Naive thymus-derived CD4-positive, alpha-beta T cell (primary cell): ENCODE measurements at regions of chr2 and their contacts with region 1.

Region 1: GRCh38 chr2:55617175-55618024 is at the start of gene PPP4R3B:
- DNase-seq: peak; percentile 94 to 100 (median 99)
- ATAC-seq: peak; percentile 94
- H3K4me3 ChIP-seq: peak within 1 kb of the TSS; percentile 83
- H3K4me3 Mint-ChIP-seq: no peak within 1 kb of the TSS
- H3K27ac ChIP-seq: peak within 1 kb of the TSS; percentile 99
- H3K27ac Mint-ChIP-seq: no peak within 1 kb of the TSS
- H3K4me1 ChIP-seq: peaks cover 33 to 46% of the 10 kb centered on the region in 2 donors
- H3K4me1 Mint-ChIP-seq: peaks cover 23 to 67% (median 30%) of the 10 kb centered on the region in 7 donors
- H3K27me3 ChIP-seq: no peaks in the 10 kb centered on the region
- H3K27me3 Mint-ChIP-seq: no peaks in the 10 kb centered on the region
- total RNA-seq, gene PPP4R3B: 67.2 to 113 (median 88.0) TPM

Region 2: GRCh38 chr2:53767405-53768241 is 1849.8 kb before region 1 on chr2 and contains the start of gene CHAC2:
- CTCF ChIA-PET with region 1: no interaction called
- POLR2A ChIA-PET with region 1: no interaction called
- intact Hi-C with region 1: loop called (anchors 1 to 2 kb)
- DNase-seq: peak; percentile 74 to 86 (median 84)
- ATAC-seq: peak; percentile 93
- H3K4me3 ChIP-seq: peak within 1 kb of the TSS; percentile 80
- H3K4me3 Mint-ChIP-seq: peak within 1 kb of the TSS; percentile 88 to 98 (median 92)
- H3K27ac ChIP-seq: peak within 1 kb of the TSS; percentile 86
- H3K27ac Mint-ChIP-seq: peak within 1 kb of the TSS; percentile 60 to 99 (median 90)
- H3K4me1 ChIP-seq: peaks cover 0 to 8% of the 10 kb centered on the region in 2 donors
- H3K4me1 Mint-ChIP-seq: peaks cover 7 to 41% (median 33%) of the 10 kb centered on the region in 7 donors
- H3K27me3 ChIP-seq: no peaks in the 10 kb centered on the region
- H3K27me3 Mint-ChIP-seq: no peaks in the 10 kb centered on the region
- total RNA-seq, gene CHAC2: 0.29 to 12.1 (median 1.2) TPM

Region 3: DNA sequence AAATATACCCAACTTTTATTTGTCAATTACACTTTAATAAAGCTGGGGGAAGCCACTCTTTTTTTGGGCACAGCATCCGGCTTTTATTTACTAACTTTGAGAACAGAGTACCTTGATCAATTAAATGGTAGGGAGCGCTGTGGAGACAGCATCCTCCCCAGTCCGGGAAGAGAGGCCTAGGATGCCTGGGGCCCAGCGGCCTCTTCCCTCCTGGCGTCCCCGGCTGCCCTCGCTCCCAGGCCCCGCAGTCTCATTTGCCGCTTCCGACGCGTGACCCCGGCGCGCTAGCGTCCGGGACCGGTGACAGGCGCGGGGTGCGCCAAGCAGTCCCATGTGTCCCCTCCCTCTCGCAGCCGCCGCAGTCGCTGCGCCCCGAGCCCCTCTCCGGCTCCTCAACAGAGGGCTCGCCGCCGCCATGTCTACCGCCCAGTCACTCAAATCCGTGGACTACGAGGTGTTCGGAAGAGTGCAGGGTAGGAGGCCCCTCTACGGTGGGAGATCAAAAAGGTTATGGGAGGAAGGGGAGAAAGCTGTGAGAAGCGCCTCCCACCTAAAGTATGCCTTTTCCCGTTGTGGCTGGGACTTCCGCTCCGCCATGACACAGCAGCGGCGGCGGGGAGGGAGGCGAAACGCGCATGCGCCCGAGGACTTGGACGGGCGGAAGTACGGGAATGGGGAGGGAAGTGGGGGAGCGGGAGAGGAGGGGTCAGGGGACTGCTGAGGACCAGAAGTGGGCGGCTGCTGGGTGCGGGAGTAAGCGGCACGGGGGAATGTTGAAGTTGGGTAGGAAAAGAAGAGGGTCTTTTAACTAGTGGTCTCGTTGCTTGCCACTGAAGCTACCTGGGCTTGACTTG is 1501.9 kb before region 1 on chr2 and contains the start of gene ACYP2:
- CTCF ChIA-PET with region 1: no interaction called
- POLR2A ChIA-PET with region 1: interaction called, 3 read pairs
- intact Hi-C with region 1: loop called in 1 of 2 experiments (anchors 1 kb)
- DNase-seq: peak; percentile 76 to 93 (median 89)
- ATAC-seq: peak; percentile 88
- H3K4me3 ChIP-seq: peak within 1 kb of the TSS; percentile 89
- H3K4me3 Mint-ChIP-seq: peak within 1 kb of the TSS; percentile 92 to 98 (median 97)
- H3K27ac ChIP-seq: peak within 1 kb of the TSS; percentile 93
- H3K27ac Mint-ChIP-seq: peak within 1 kb of the TSS; percentile 98 to 100 (median 99)
- H3K4me1 ChIP-seq: peaks cover 0 to 6% of the 10 kb centered on the region in 2 donors
- H3K4me1 Mint-ChIP-seq: peaks cover 10 to 31% (median 24%) of the 10 kb centered on the region in 7 donors
- H3K27me3 ChIP-seq: no peaks in the 10 kb centered on the region
- H3K27me3 Mint-ChIP-seq: peaks cover 0 to 5% (median 0%) of the 10 kb centered on the region in 5 donors
- total RNA-seq, gene ACYP2: 12.3 to 19.6 (median 15.6) TPM

Region 4: DNA sequence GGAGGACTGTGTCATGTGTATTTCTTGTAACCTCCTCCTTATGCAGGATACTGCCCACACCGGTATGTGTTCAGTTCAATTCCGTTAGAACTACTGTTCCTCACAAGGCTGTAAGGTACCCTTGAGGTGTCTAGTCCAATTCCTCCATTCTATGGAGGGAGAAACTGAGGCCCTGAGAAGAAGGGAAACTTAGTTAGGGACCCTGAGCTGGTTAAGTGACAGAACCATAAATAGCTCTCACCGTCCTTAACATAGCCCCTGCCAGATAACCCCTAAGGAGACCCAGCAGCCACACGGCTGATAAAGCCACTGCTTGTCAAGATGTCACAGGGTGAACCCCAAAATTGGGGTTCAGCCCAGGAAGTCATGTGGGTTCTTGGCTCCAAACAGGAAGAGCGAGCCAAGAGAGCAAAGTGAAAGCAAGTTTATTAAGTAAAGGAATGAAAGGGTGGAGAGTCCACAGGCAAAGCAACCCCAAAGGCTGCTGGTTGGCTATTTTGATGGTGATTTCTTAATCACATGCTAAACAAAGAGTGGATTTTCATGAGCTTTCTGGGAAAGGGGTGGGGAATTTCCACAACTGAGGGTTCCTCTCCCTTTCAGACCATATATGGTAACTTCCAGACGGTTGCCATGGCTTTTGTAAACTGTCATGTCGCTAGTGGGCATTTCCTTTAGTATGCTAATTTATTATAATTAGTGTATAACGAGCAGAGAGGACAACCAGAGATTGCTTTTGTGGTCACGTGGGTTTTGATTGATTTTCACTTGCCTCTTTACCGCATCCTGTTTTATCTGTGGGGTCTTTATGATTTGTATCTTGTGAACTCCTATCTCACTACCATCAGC is 483.7 kb before region 1 on chr2:
- CTCF ChIA-PET with region 1: no interaction called
- POLR2A ChIA-PET with region 1: no interaction called
- intact Hi-C with region 1: loop called (anchors 2 to 5 kb)
- DNase-seq: peak; percentile 17 to 78 (median 52)
- ATAC-seq: peak; percentile 91
- H3K4me3 ChIP-seq: peak overlapping the region; percentile 55
- H3K4me3 Mint-ChIP-seq: peak overlapping the region; percentile 83 to 94 (median 88)
- H3K27ac ChIP-seq: peak overlapping the region; percentile 76
- H3K27ac Mint-ChIP-seq: peak overlapping the region; percentile 91 to 98 (median 97)
- H3K4me1 ChIP-seq: peaks cover 14 to 22% of the 10 kb centered on the region in 2 donors
- H3K4me1 Mint-ChIP-seq: peaks cover 19 to 49% (median 39%) of the 10 kb centered on the region in 7 donors
- H3K27me3 ChIP-seq: no peaks in the 10 kb centered on the region
- H3K27me3 Mint-ChIP-seq: no peaks in the 10 kb centered on the region

Region 5: DNA sequence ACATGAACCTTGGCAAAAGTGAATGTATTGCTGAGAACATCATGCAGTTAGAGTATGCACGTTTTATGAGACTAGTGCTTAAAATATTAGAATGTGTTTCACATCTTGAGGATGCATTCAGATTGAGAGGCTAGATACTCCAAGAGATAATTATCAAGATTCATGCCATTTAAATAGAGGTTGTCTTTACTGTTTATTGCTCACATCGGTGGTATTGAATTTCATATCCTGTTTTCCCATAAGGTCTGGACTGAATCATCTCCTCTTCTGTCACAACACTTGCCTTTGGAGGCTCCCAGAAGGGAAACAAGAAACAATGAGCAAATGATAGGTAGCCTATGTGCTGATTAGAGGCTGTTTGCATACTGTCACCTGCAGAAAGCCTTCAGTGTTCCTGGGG is 469.1 kb before region 1 on chr2:
- CTCF ChIA-PET with region 1: no interaction called
- POLR2A ChIA-PET with region 1: no interaction called
- intact Hi-C with region 1: no loop called
- DNase-seq: no peak
- ATAC-seq: no peak
- H3K4me3 ChIP-seq: no peak overlapping the region
- H3K4me3 Mint-ChIP-seq: no peak overlapping the region
- H3K27ac ChIP-seq: no peak overlapping the region
- H3K27ac Mint-ChIP-seq: no peak overlapping the region
- H3K4me1 ChIP-seq: no peaks in the 10 kb centered on the region
- H3K4me1 Mint-ChIP-seq: peaks cover 0 to 7% (median 0%) of the 10 kb centered on the region in 7 donors
- H3K27me3 ChIP-seq: no peaks in the 10 kb centered on the region
- H3K27me3 Mint-ChIP-seq: no peaks in the 10 kb centered on the region

Region 6: GRCh38 chr2:55268907-55269644 is 348.3 kb before region 1 on chr2 and contains the start of gene MTIF2:
- CTCF ChIA-PET with region 1: no interaction called
- POLR2A ChIA-PET with region 1: interaction called, 3 read pairs
- intact Hi-C with region 1: loop called in 1 of 2 experiments (anchors 1 kb)
- DNase-seq: peak; percentile 64 to 90 (median 75)
- ATAC-seq: peak; percentile 97
- H3K4me3 ChIP-seq: peak within 1 kb of the TSS; percentile 84
- H3K4me3 Mint-ChIP-seq: peak within 1 kb of the TSS; percentile 78 to 97 (median 94)
- H3K27ac ChIP-seq: peak within 1 kb of the TSS; percentile 79
- H3K27ac Mint-ChIP-seq: peak within 1 kb of the TSS; percentile 94 to 97 (median 96)
- H3K4me1 ChIP-seq: peaks cover 13 to 16% of the 10 kb centered on the region in 2 donors
- H3K4me1 Mint-ChIP-seq: peaks cover 15 to 35% (median 27%) of the 10 kb centered on the region in 7 donors
- H3K27me3 ChIP-seq: no peaks in the 10 kb centered on the region
- H3K27me3 Mint-ChIP-seq: peaks cover 0 to 5% (median 0%) of the 10 kb centered on the region in 5 donors
- total RNA-seq, gene MTIF2: 23.0 to 35.5 (median 28.0) TPM

Region 7: DNA sequence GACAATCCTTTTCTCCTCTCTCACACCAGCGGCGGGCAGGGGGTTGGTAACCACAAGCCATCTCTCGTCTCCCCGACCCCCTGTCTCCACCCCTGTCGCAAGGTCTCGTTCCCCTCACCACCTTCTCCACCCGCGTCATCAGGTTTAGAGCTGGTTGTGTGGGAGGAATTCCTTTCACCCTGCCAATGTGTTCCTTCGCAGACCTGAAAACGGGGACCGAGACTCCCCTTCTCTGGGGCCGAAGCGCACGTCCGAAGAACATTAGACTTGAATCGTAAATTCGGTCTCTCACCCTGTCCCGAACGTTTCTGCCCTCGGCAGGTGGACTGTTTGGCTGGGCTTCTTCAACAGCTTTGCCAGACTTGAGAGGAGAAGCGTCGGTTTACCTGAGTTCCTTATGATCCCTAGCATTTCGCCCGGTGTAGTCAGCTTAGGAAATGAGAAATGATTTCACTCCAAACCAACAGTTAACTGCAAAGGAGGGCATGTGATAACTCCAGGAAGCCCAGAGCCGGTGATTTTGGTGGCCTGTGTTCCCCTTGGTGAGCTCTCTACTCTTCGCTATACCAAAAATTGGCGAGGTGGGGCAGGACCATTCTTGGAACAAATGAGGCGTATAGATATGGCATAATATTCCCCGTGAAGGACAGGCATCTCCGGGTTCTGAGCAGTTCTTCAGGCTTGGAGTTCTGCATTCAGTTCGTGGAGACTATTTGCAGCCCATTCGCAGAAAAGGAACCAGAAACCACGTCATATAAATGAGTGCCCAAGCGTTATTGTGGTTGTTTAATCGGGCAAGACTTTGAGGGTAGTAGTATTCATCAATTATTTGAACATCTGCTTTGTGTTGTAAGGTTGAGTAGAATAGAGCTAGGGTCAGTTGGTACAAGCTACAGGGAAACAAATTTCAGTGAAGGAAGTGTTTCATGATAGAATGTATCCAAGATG is 97.2 kb before region 1 on chr2:
- CTCF ChIA-PET with region 1: interaction called, 4 read pairs
- POLR2A ChIA-PET with region 1: interaction called, 95 read pairs
- intact Hi-C with region 1: loop called (anchors 1 kb)
- DNase-seq: peak in 4 of 9 donors; percentile 23 to 58 (median 26)
- ATAC-seq: peak; percentile 31
- H3K4me3 ChIP-seq: peak overlapping the region; percentile 80
- H3K4me3 Mint-ChIP-seq: peak overlapping the region; percentile 89 to 99 (median 98)
- H3K27ac ChIP-seq: peak overlapping the region; percentile 90
- H3K27ac Mint-ChIP-seq: peak overlapping the region; percentile 96 to 100 (median 100)
- H3K4me1 ChIP-seq: peaks cover 0 to 5% of the 10 kb centered on the region in 2 donors
- H3K4me1 Mint-ChIP-seq: peaks cover 5 to 28% (median 16%) of the 10 kb centered on the region in 7 donors
- H3K27me3 ChIP-seq: no peaks in the 10 kb centered on the region
- H3K27me3 Mint-ChIP-seq: no peaks in the 10 kb centered on the region

Region 8: DNA sequence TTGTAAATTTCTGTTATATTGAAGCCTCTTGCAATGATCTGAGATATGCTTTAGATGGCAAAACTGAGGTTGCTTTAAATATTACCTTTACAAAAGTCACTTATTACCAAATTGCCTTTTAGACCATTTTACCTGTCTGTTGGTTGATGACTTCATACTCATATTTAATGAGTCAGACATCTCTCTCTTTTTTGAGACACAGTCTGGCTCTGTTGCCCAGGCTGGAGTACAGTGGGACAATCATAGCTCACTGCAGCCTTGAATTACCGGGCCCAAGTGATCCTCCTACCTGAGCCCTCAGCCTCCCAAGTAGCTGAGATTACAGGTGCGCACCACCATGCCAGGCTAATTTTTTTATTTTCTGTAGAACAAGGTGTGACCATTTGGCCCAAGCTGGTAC is 11.5 kb after region 1 on chr2:
- CTCF ChIA-PET with region 1: no interaction called
- POLR2A ChIA-PET with region 1: interaction called, 8 read pairs
- intact Hi-C with region 1: loop called in 1 of 2 experiments (anchors 2 kb)
- DNase-seq: no peak
- ATAC-seq: no peak
- H3K4me3 ChIP-seq: no peak overlapping the region
- H3K4me3 Mint-ChIP-seq: no peak overlapping the region
- H3K27ac ChIP-seq: no peak overlapping the region
- H3K27ac Mint-ChIP-seq: peak overlapping the region in 3 of 9 donors; percentile 3 to 10 (median 9)
- H3K4me1 ChIP-seq: peaks cover under 1 to 5% of the 10 kb centered on the region in 2 donors
- H3K4me1 Mint-ChIP-seq: peaks cover 16 to 54% (median 39%) of the 10 kb centered on the region in 7 donors
- H3K27me3 ChIP-seq: no peaks in the 10 kb centered on the region
- H3K27me3 Mint-ChIP-seq: no peaks in the 10 kb centered on the region